OCI-LY7 (cell line): ENCODE measurements at regions of chr9 and their contacts with region 1.

Region 1: GRCh38 chr9:96441798-96442445 is 8.0 kb upstream of the HABP4 start:
- DNase-seq: peak; percentile 60
- H3K4me3 ChIP-seq: no peak overlapping the region
- H3K27ac ChIP-seq: no peak overlapping the region
- H3K4me1 ChIP-seq: no peaks in the 10 kb centered on the region
- CTCF ChIP-seq: peak; percentile 82

Region 2: GRCh38 chr9:95373069-95373681 is 1068.7 kb before region 1 on chr9:
- CTCF ChIA-PET with region 1: no interaction called
- POLR2A ChIA-PET with region 1: no interaction called
- intact Hi-C with region 1: no loop called
- DNase-seq: no peak
- H3K4me3 ChIP-seq: no peak overlapping the region
- H3K27ac ChIP-seq: no peak overlapping the region
- H3K4me1 ChIP-seq: no peaks in the 10 kb centered on the region
- CTCF ChIP-seq: no peak

Region 3: DNA sequence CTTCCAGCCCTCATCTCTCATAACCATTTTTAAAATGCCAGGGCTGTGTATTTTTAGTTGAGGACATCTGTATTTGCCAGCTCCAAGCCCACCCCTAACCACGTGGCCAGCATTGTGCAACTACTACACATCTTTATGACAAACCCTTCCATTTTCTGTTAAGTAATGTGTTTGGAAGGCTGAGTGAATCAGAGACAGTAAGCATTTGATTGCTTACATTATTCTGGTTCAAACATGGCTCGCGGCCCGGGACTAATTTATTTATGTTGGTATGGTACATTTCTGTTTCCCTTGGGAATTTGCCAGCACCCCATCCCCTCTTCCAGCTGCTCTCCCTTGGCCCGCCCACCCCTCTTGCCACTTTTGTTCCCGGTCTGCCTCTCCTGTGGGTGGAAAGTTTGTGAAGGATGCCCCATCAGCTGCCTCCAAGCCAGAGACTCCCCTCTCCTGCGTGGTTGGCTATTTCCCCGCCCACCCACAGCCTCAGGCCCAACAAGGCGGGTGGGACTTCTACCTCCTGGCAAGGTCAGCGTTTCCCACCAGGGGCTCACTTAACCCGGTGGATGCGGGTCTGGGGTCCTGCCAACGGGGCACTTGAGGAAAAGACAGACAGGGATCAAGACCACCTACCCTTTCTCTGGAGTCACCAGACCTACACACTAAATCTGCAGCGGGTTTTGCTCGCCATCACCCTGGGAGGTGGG is 302.2 kb before region 1 on chr9:
- CTCF ChIA-PET with region 1: no interaction called
- POLR2A ChIA-PET with region 1: no interaction called
- intact Hi-C with region 1: no loop called
- DNase-seq: no peak
- H3K4me3 ChIP-seq: no peak overlapping the region
- H3K27ac ChIP-seq: no peak overlapping the region
- H3K4me1 ChIP-seq: peaks cover 9% of the 10 kb centered on the region
- CTCF ChIP-seq: no peak

Region 4: DNA sequence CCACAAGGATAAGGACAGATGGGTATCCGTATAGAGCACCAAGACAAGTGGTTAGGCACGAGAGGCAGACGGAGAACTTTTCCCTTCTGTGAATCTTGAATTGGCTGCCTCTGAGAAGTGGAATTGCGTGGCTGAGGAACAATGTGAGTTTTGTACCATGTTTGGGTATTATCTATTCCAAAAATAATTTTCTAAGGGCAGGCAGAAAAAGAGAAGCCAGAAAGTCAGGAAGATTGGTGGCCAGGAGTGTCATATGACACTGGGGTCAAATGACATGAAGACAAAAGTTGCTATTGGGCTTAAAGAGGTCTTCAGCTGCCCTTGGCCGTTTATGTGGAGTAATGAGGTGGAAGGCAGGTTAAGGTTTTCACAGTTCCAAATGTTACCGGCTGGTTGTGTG is 22.5 kb after region 1 on chr9:
- CTCF ChIA-PET with region 1: no interaction called
- POLR2A ChIA-PET with region 1: no interaction called
- intact Hi-C with region 1: loop called (anchors 2 kb)
- DNase-seq: no peak
- H3K4me3 ChIP-seq: no peak overlapping the region
- H3K27ac ChIP-seq: no peak overlapping the region
- H3K4me1 ChIP-seq: no peaks in the 10 kb centered on the region
- CTCF ChIP-seq: no peak

Region 5: DNA sequence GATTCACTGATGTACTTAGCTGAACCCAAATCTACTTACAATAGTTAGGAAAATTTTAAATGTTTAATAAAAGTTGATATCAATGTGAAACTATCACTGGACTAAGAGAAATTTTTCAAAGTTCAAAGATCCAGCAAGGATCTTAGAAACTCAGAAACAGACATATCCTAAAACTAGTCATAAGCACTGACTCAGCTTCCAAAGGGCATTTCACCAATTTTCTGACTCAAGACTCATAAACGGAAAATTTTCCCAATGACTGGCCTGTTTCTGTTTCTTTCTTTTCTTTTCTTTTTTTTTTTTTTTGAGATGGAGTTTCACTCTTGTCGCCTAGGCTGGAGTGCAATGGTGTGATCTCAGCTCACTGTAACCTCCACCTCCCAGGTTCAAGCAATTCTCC is 111.1 kb after region 1 on chr9:
- CTCF ChIA-PET with region 1: no interaction called
- POLR2A ChIA-PET with region 1: no interaction called
- intact Hi-C with region 1: no loop called
- DNase-seq: no peak
- H3K4me3 ChIP-seq: no peak overlapping the region
- H3K27ac ChIP-seq: no peak overlapping the region
- H3K4me1 ChIP-seq: no peaks in the 10 kb centered on the region
- CTCF ChIP-seq: no peak

Region 6: GRCh38 chr9:96654443-96655197 is 212.7 kb after region 1 on chr9:
- CTCF ChIA-PET with region 1: no interaction called
- POLR2A ChIA-PET with region 1: no interaction called
- intact Hi-C with region 1: loop called (anchors 5 kb)
- DNase-seq: no peak
- H3K4me3 ChIP-seq: no peak overlapping the region
- H3K27ac ChIP-seq: no peak overlapping the region
- H3K4me1 ChIP-seq: peaks cover 3% of the 10 kb centered on the region
- CTCF ChIP-seq: no peak

Region 7: GRCh38 chr9:96667361-96667728 is 225.4 kb after region 1 on chr9:
- CTCF ChIA-PET with region 1: no interaction called
- POLR2A ChIA-PET with region 1: interaction called, 3 read pairs
- intact Hi-C with region 1: loop called (anchors 5 kb)
- DNase-seq: no peak
- H3K4me3 ChIP-seq: no peak overlapping the region
- H3K27ac ChIP-seq: no peak overlapping the region
- H3K4me1 ChIP-seq: no peaks in the 10 kb centered on the region
- CTCF ChIP-seq: no peak